Esophagus muscularis mucosa (tissue), 4 donors: ENCODE measurements at regions of chr16 and their contacts with region 1.

Region 1: DNA sequence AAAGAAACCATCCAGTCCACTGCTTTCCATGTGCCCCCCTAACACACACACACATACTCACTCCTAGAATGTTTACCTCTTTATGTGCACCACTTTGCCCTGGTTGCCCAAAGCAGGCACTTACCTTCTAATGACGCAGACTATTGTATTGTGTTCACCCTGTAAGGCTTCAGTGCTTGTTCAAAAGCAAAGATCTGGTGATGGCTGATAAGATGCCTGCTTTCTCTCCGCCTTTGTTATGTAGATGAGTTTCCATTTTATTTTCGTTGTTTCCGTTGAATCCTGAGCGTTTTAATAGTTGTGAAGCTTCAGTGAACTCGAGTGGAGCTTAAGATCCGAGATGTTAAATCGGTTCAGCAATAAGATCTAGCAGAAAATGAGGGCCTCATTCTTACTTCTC is 452.7 kb downstream of the TMEM114 start:
- DNase-seq: no peak
- H3K4me3 ChIP-seq: no peak overlapping the region
- H3K27ac ChIP-seq: no peak overlapping the region
- H3K4me1 ChIP-seq: no peaks in the 10 kb centered on the region
- H3K27me3 ChIP-seq: no peaks in the 10 kb centered on the region
- CTCF ChIP-seq: no peak
- EP300 ChIP-seq: no peak
- POLR2A ChIP-seq: no peak

Region 2: GRCh38 chr16:8070506-8070905 is 67.1 kb before region 1 on chr16:
- intact Hi-C with region 1: no loop called
- DNase-seq: no peak
- H3K4me3 ChIP-seq: no peak overlapping the region
- H3K27ac ChIP-seq: no peak overlapping the region
- H3K4me1 ChIP-seq: no peaks in the 10 kb centered on the region
- H3K27me3 ChIP-seq: no peaks in the 10 kb centered on the region
- CTCF ChIP-seq: no peak
- EP300 ChIP-seq: no peak
- POLR2A ChIP-seq: no peak

Region 3: GRCh38 chr16:8094696-8095095 is 42.9 kb before region 1 on chr16:
- intact Hi-C with region 1: loop called (anchors 5 kb)
- DNase-seq: no peak
- H3K4me3 ChIP-seq: no peak overlapping the region
- H3K27ac ChIP-seq: no peak overlapping the region
- H3K4me1 ChIP-seq: no peaks in the 10 kb centered on the region
- H3K27me3 ChIP-seq: no peaks in the 10 kb centered on the region
- CTCF ChIP-seq: no peak
- EP300 ChIP-seq: no peak
- POLR2A ChIP-seq: no peak